Breast epithelium (tissue), 4 donors: ENCODE measurements at regions of chr9 and their contacts with region 1.

Region 1: GRCh38 chr9:119905724-119906123 is 536.5 kb upstream of the BRINP1 start:
- DNase-seq: no peak
- H3K4me3 ChIP-seq: no peak overlapping the region
- H3K27ac ChIP-seq: peak overlapping the region in 1 of 2 donors; percentile 19
- H3K4me1 ChIP-seq: no peaks in the 10 kb centered on the region
- H3K27me3 ChIP-seq: no peaks in the 10 kb centered on the region
- CTCF ChIP-seq: no peak
- POLR2A ChIP-seq: no peak

Region 2: GRCh38 chr9:119771341-119771740 is 134.4 kb before region 1 on chr9:
- intact Hi-C with region 1: loop called (anchors 5 kb)
- DNase-seq: no peak
- H3K4me3 ChIP-seq: no peak overlapping the region
- H3K27ac ChIP-seq: no peak overlapping the region
- H3K4me1 ChIP-seq: no peaks in the 10 kb centered on the region
- H3K27me3 ChIP-seq: no peaks in the 10 kb centered on the region
- CTCF ChIP-seq: no peak
- POLR2A ChIP-seq: no peak